Ovary (tissue), 10 donors: ENCODE measurements at regions of chr4 and their contacts with region 1.

Region 1: DNA sequence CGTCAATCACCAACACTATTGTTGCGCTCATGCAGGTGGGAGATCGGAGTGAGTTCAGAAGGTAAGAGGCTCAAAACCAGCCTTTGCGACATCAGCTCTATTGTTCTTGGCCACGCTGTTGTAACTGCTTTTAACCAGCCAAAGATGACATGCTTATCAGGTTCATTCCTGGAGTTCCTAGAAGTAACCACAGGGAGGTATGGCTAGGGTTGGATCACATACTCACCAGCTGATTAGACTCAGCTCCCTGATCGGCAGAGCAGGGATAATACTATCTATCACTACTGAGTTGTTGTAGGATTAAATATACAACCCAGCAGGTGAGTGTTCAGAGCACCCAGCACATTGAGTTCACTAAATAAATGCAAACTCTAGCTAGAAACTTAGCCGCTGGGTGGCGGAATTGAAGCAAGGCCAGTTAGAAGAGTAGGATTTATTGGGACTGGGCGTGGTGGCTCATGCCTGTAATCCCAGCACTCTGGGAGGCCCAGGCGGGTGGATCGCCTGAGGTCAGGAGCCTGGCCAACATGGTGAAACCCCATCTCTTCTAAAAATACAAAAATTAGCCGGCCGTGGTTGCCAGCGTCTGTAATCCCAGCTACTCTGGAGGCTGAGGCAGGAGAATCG is 12.4 kb downstream of the SLC34A2 start:
- DNase-seq: no peak
- H3K4me3 ChIP-seq: no peak overlapping the region
- H3K27ac ChIP-seq: no peak overlapping the region
- H3K4me1 ChIP-seq: no peaks in the 10 kb centered on the region
- H3K27me3 ChIP-seq: no peaks in the 10 kb centered on the region
- CTCF ChIP-seq: no peak
- EP300 ChIP-seq: no peak
- POLR2A ChIP-seq: no peak

Region 2: DNA sequence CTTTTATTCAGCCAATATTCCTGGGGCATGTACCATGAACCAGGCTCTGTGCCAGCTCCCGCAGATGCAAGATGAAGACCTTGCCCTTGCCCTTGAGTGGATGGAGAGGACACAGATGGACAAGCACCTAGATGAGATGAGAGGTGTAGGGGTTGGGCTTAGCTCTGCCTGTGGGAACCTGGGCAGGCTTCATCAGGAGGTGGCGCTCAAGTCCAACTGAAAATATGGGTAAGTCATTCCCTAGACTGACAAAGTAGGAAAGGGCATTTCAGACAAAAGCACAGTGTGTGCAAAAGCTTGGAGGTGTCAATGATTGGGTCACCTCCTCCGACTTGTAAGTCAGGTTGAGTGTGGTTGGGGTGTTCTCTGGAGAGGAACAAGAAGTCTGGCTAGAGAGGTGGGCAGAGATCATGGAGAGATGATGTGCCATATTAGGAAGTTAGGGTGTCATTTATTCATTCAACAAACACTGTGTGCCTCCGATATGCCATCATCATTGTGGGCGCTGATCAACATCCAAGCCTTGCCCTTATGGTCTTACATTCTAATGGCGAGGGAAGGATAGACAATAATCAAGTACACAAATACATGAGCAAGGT is 226.4 kb before region 1 on chr4:
- intact Hi-C with region 1: no loop called
- DNase-seq: peak; percentile 32 to 57 (median 40)
- H3K4me3 ChIP-seq: no peak overlapping the region
- H3K27ac ChIP-seq: no peak overlapping the region
- H3K4me1 ChIP-seq: peaks cover 8% of the 10 kb centered on the region
- H3K27me3 ChIP-seq: no peaks in the 10 kb centered on the region
- CTCF ChIP-seq: no peak
- EP300 ChIP-seq: no peak
- POLR2A ChIP-seq: no peak

Region 3: GRCh38 chr4:25953740-25954139 is 285.7 kb after region 1 on chr4:
- intact Hi-C with region 1: loop called in 1 of 4 experiments (anchors 5 kb)
- DNase-seq: no peak
- H3K4me3 ChIP-seq: no peak overlapping the region
- H3K27ac ChIP-seq: no peak overlapping the region
- H3K4me1 ChIP-seq: no peaks in the 10 kb centered on the region
- H3K27me3 ChIP-seq: no peaks in the 10 kb centered on the region
- CTCF ChIP-seq: no peak
- EP300 ChIP-seq: no peak
- POLR2A ChIP-seq: no peak